ENCODE measurements at regions of chr16 and their contacts with region 1.

Region 1: DNA sequence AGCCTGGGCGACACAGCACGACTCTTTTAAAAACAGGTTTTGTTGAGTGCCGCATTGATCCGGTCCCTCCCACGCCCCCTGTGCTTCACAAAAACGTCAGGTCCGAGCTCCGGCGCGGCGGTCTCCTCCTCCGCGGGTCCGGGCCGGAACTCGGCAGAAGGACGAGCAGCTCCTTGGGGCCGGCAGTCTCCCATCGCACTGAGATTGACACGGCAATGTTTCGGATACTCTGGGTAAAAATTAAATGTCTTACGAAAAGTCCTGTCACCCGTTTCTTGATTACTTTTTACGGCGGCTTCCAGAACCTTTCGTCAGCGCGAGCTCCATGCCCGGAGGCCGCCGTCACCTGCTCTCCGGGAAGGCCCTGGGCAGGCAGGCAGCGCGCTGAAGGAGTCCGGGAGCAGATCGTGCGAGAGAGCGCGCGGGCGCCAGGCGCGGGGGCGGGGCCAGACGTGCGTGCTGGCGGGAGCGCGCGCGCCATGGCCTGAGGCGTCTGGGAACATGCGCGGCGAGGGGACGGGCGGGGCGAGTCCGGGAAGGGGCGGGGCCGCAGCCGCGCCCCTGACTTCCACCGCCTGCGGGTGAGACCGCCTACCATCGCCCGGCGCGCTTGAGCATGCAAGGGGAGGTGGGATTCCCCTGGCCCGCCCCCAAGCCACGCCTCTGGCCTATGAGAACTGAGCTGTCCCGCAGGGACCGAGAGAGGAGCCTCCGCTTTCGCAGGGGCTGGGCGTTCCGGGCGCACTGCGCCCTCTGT is 11.7 kb upstream of the SRL start:
- DNase-seq: peak; percentile 98
- H3K4me3 ChIP-seq: peak overlapping the region; percentile 41 to 70 (median 58)
- H3K27ac ChIP-seq: no peak overlapping the region; the same call in 1 of the 2 replicates
- H3K4me1 ChIP-seq: peaks cover 0 to 3% (median 0%) of the 10 kb centered on the region in 4 experiments; a peak in 1 of 7 replicates
- H3K27me3 ChIP-seq: no peaks in the 10 kb centered on the region
- CTCF ChIP-seq: no peak
- EP300 ChIP-seq: no peak
- POLR2A ChIP-seq: peak; percentile 53 to 70
- RAD21 ChIP-seq: peak; percentile 87 to 91

Region 2: DNA sequence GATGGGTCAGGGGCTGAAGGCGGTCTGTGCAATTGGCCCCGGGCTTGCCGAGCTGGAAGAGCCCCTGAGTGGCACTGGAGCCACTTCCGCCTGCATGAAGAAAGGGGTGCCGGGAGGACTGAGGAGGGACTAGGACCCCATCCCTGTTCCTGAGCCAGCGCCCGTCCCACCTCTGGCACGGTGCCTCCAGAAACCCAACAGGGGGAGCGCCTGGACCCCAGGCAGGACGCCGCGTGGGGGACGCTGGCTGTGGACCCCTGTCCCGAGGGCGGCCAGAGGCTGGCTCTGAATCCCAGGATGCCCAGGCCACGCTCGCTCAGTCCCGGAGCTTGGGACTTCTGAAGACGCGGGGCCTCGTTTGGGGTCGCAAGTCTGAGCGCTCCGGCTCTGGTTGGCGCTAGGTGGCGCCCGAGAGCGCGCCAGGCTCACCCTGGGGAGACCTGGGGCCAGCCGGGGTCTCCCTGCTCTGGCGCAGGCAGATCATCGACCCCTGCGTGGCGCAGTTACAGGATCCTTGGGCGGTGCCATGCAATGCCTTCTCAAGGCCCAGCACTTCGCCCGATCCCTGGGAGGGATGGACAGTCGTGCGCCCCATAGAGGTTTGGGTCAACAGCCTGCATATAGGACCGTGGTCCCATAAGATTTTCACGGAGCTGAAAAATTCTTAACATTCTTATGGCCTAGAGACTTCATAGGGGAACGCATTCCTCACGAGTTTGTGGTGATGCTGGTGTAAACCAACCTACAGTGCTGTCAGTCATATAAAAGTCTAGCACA is 314.5 kb before region 1 on chr16:
- CTCF ChIA-PET with region 1: interaction called, 12 read pairs
- POLR2A ChIA-PET with region 1: no interaction called
- DNase-seq: peak; percentile 86 to 94
- H3K4me3 ChIP-seq: peak overlapping the region in 3 of 4 experiments; percentile 9 to 50 (median 19); a peak in 4 of 8 replicates
- H3K27ac ChIP-seq: no peak overlapping the region
- H3K4me1 ChIP-seq: peaks cover 0 to 4% (median 2%) of the 10 kb centered on the region in 4 experiments; a peak in 3 of 7 replicates
- H3K27me3 ChIP-seq: peaks cover 0 to 2% (median 1%) of the 10 kb centered on the region in 4 experiments; a peak in 1 of 7 replicates
- CTCF ChIP-seq: peak; percentile 77 to 96 (median 93)
- EP300 ChIP-seq: no peak
- POLR2A ChIP-seq: peak in 1 of 2 experiments; percentile 55; a peak in 1 of 3 replicates
- RAD21 ChIP-seq: peak; percentile 63 to 82

Region 3: GRCh38 chr16:3988824-3989223 is 264.7 kb before region 1 on chr16:
- CTCF ChIA-PET with region 1: interaction called, 22 read pairs
- POLR2A ChIA-PET with region 1: interaction called, 9 read pairs
- DNase-seq: no peak
- H3K4me3 ChIP-seq: no peak overlapping the region
- H3K27ac ChIP-seq: no peak overlapping the region
- H3K4me1 ChIP-seq: no peaks in the 10 kb centered on the region
- H3K27me3 ChIP-seq: no peaks in the 10 kb centered on the region
- CTCF ChIP-seq: no peak
- EP300 ChIP-seq: no peak
- POLR2A ChIP-seq: no peak
- RAD21 ChIP-seq: no peak

Region 4: DNA sequence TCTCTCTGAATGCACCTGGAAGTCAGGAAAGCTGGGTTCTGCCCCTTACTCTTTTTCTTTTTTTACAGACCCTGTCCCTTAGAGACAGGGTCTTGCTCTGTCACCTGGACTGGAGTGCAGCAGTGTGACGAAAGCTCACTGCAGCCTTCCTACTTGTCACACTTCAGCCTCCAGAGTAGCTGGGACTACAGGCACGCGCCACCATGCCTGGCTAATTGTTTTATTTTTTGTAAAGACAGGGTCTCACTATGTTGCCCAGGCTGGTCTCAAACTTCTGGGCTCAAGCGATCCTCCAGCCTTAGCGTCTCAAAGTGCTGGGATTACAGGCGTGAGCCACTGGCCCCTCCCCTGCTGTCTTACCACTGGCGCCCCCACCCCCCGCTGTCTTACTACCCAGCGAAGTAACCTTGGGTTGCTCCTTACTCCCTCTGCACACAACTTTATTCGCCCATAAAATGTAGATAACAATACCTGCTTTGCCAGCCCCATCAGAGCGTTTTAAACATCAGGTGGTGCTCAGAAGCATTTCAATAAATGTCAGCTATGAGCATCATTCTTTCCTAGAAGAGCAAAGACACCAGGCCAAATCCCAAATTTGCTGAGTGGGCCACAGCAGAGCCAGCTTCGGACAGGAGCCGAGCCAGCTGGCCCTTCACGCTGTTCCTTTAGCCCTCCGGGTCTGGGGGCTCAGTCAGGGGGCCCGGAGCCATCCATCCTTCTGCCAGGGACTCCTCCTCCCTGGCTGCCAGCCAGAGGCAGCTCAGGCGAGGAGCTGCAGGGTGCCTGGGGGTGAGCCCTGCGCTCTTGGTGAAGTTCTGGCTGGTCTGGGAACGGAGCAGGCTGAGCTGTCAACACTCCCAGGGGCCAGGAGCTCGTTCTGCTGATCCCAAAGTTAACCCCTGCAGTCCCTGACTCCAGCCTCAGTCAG is 36.1 kb before region 1 on chr16:
- CTCF ChIA-PET with region 1: interaction called, 11 read pairs
- POLR2A ChIA-PET with region 1: interaction called, 4 read pairs
- DNase-seq: no peak
- H3K4me3 ChIP-seq: peak overlapping the region in 1 of 4 experiments; percentile 8; a peak in 1 of 8 replicates
- H3K27ac ChIP-seq: no peak overlapping the region
- H3K4me1 ChIP-seq: peaks cover 6 to 17% (median 8%) of the 10 kb centered on the region in 4 experiments
- H3K27me3 ChIP-seq: no peaks in the 10 kb centered on the region
- CTCF ChIP-seq: no peak
- EP300 ChIP-seq: no peak
- POLR2A ChIP-seq: no peak
- RAD21 ChIP-seq: no peak

Region 5: GRCh38 chr16:4239020-4239419 is 14.6 kb before region 1 on chr16:
- CTCF ChIA-PET with region 1: interaction called, 18 read pairs
- POLR2A ChIA-PET with region 1: interaction called, 10 read pairs
- DNase-seq: no peak
- H3K4me3 ChIP-seq: no peak overlapping the region
- H3K27ac ChIP-seq: no peak overlapping the region
- H3K4me1 ChIP-seq: peaks cover 0 to 3% (median 0%) of the 10 kb centered on the region in 4 experiments; a peak in 4 of 7 replicates
- H3K27me3 ChIP-seq: no peaks in the 10 kb centered on the region
- CTCF ChIP-seq: no peak
- EP300 ChIP-seq: no peak
- POLR2A ChIP-seq: no peak
- RAD21 ChIP-seq: no peak

Measured in H1 (cell line).